ENCODE measurements at regions of chr17 and their contacts with region 1.

Region 1: GRCh38 chr17:78140169-78140976 is 5.8 kb upstream of the C17orf99 start:
- DNase-seq: peak; percentile 84 to 97 (median 92)
- ATAC-seq: peak; percentile 85
- H3K4me3 ChIP-seq: no peak overlapping the region
- H3K4me3 Mint-ChIP-seq: peak overlapping the region; percentile 77
- H3K27ac ChIP-seq: peak overlapping the region in 1 of 2 donors; percentile 38
- H3K27ac Mint-ChIP-seq: peak overlapping the region; percentile 91
- H3K4me1 ChIP-seq: peaks cover 95% of the 10 kb centered on the region
- H3K4me1 Mint-ChIP-seq: peaks cover 73% of the 10 kb centered on the region
- H3K27me3 ChIP-seq: no peaks in the 10 kb centered on the region
- H3K27me3 Mint-ChIP-seq: no peaks in the 10 kb centered on the region
- CTCF ChIP-seq: no peak

Region 2: DNA sequence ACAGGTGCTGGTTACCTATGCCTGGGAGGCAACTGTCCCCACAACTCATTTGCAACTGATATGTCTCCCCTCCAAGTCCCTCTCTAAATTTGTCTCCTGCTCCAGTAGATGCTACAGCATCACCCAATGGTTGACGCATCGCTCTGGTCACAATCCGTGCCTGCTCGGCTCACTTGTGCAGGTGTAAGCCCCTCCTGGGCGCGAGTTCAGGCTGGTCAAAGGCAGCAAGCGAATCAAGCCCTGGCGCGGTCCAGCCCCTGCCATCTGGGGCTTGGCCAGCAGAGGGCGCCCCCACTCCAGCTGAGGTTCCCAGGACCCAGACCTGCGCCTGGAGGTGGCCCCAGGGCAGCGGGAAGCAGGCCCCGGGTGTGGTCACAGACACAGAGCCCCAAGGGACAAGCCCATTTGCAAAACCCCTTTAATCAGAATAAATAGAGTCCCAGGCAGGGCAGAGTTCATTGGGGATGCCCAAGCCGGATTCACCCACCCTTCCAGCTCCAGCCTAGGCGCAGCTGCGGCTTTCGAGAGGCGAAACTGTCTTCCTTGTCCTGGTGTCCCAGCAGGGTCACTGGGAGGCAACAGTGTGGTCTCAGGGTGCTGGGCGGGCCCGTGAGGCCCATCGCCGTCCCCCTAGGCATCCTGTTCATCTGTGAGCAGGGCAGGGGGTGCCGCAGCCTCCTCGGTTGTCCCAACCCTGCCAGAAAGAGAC is 27.7 kb before region 1 on chr17:
- CTCF ChIA-PET with region 1: interaction called, 37 read pairs
- POLR2A ChIA-PET with region 1: interaction called, 766 read pairs
- intact Hi-C with region 1: loop called in 1 of 2 experiments (anchors 5 kb)
- DNase-seq: peak; percentile 55 to 87 (median 77)
- ATAC-seq: peak; percentile 73
- H3K4me3 ChIP-seq: no peak overlapping the region
- H3K4me3 Mint-ChIP-seq: no peak overlapping the region
- H3K27ac ChIP-seq: peak overlapping the region; percentile 7 to 46
- H3K27ac Mint-ChIP-seq: peak overlapping the region; percentile 84
- H3K4me1 ChIP-seq: peaks cover 72% of the 10 kb centered on the region
- H3K4me1 Mint-ChIP-seq: peaks cover 36% of the 10 kb centered on the region
- H3K27me3 ChIP-seq: no peaks in the 10 kb centered on the region
- H3K27me3 Mint-ChIP-seq: no peaks in the 10 kb centered on the region
- CTCF ChIP-seq: peak; percentile 100

Region 3: GRCh38 chr17:78128551-78129350 is 11.6 kb before region 1 on chr17 and contains the start of gene TMC6:
- CTCF ChIA-PET with region 1: interaction called, 28 read pairs
- POLR2A ChIA-PET with region 1: interaction called, 766 read pairs
- intact Hi-C with region 1: no loop called
- DNase-seq: peak; percentile 58 to 89 (median 75)
- ATAC-seq: peak; percentile 43
- H3K4me3 ChIP-seq: peak within 1 kb of the TSS; percentile 94
- H3K4me3 Mint-ChIP-seq: peak within 1 kb of the TSS; percentile 100
- H3K27ac ChIP-seq: peak within 1 kb of the TSS; percentile 75 to 92
- H3K27ac Mint-ChIP-seq: peak within 1 kb of the TSS; percentile 96
- H3K4me1 ChIP-seq: peaks cover 76% of the 10 kb centered on the region
- H3K4me1 Mint-ChIP-seq: peaks cover 56% of the 10 kb centered on the region
- H3K27me3 ChIP-seq: no peaks in the 10 kb centered on the region
- H3K27me3 Mint-ChIP-seq: no peaks in the 10 kb centered on the region
- CTCF ChIP-seq: no peak
- total RNA-seq, gene TMC6: 645 to 659 TPM

Region 4: GRCh38 chr17:78151514-78152008 is 11.2 kb after region 1 on chr17:
- CTCF ChIA-PET with region 1: interaction called, 4 read pairs
- POLR2A ChIA-PET with region 1: interaction called, 10 read pairs
- intact Hi-C with region 1: no loop called
- DNase-seq: no peak
- ATAC-seq: no peak
- H3K4me3 ChIP-seq: no peak overlapping the region
- H3K4me3 Mint-ChIP-seq: no peak overlapping the region
- H3K27ac ChIP-seq: no peak overlapping the region
- H3K27ac Mint-ChIP-seq: no peak overlapping the region
- H3K4me1 ChIP-seq: peaks cover 23% of the 10 kb centered on the region
- H3K4me1 Mint-ChIP-seq: peaks cover 14% of the 10 kb centered on the region
- H3K27me3 ChIP-seq: no peaks in the 10 kb centered on the region
- H3K27me3 Mint-ChIP-seq: no peaks in the 10 kb centered on the region
- CTCF ChIP-seq: no peak

Region 5: GRCh38 chr17:78168242-78168902 is 28.0 kb after region 1 on chr17 and contains the start of gene SYNGR2:
- CTCF ChIA-PET with region 1: interaction called, 3 read pairs
- POLR2A ChIA-PET with region 1: interaction called, 10 read pairs
- intact Hi-C with region 1: loop called (anchors 1 to 2 kb)
- DNase-seq: peak; percentile 76 to 94 (median 88)
- ATAC-seq: peak; percentile 89
- H3K4me3 ChIP-seq: peak within 1 kb of the TSS; percentile 72
- H3K4me3 Mint-ChIP-seq: peak within 1 kb of the TSS; percentile 79
- H3K27ac ChIP-seq: peak within 1 kb of the TSS; percentile 71 to 74
- H3K27ac Mint-ChIP-seq: peak within 1 kb of the TSS; percentile 71
- H3K4me1 ChIP-seq: peaks cover 52% of the 10 kb centered on the region
- H3K4me1 Mint-ChIP-seq: peaks cover 36% of the 10 kb centered on the region
- H3K27me3 ChIP-seq: no peaks in the 10 kb centered on the region
- H3K27me3 Mint-ChIP-seq: no peaks in the 10 kb centered on the region
- CTCF ChIP-seq: no peak
- total RNA-seq, gene SYNGR2: 34.9 to 41.3 TPM

Region 6: GRCh38 chr17:78186692-78187595 is 46.6 kb after region 1 on chr17 and contains the starts of genes AFMID and TK1:
- CTCF ChIA-PET with region 1: no interaction called
- POLR2A ChIA-PET with region 1: no interaction called
- intact Hi-C with region 1: loop called in 1 of 2 experiments (anchors 5 kb)
- DNase-seq: peak; percentile 45 to 89 (median 70)
- ATAC-seq: peak; percentile 88
- H3K4me3 ChIP-seq: peak within 1 kb of the TSS; percentile 64
- H3K4me3 Mint-ChIP-seq: peak within 1 kb of the TSS; percentile 84
- H3K27ac ChIP-seq: no peak within 1 kb of the TSS
- H3K27ac Mint-ChIP-seq: no peak within 1 kb of the TSS
- H3K4me1 ChIP-seq: peaks cover 22% of the 10 kb centered on the region
- H3K4me1 Mint-ChIP-seq: peaks cover 16% of the 10 kb centered on the region
- H3K27me3 ChIP-seq: no peaks in the 10 kb centered on the region
- H3K27me3 Mint-ChIP-seq: no peaks in the 10 kb centered on the region
- CTCF ChIP-seq: peak; percentile 47
- total RNA-seq, gene AFMID: 0.42 to 0.60 TPM
- total RNA-seq, gene TK1: 0.78 to 0.88 TPM